MCF 10A (cell line): ENCODE measurements at regions of chr19 and their contacts with region 1.

Region 1: GRCh38 chr19:35066691-35067563 is 25.4 kb downstream of the HPN start:
- DNase-seq: peak; percentile 90
- H3K4me3 Mint-ChIP-seq: no peak overlapping the region
- H3K27ac Mint-ChIP-seq: no peak overlapping the region
- H3K4me1 Mint-ChIP-seq: no peaks in the 10 kb centered on the region
- H3K27me3 Mint-ChIP-seq: no peaks in the 10 kb centered on the region
- CTCF ChIP-seq: peak; percentile 97

Region 2: DNA sequence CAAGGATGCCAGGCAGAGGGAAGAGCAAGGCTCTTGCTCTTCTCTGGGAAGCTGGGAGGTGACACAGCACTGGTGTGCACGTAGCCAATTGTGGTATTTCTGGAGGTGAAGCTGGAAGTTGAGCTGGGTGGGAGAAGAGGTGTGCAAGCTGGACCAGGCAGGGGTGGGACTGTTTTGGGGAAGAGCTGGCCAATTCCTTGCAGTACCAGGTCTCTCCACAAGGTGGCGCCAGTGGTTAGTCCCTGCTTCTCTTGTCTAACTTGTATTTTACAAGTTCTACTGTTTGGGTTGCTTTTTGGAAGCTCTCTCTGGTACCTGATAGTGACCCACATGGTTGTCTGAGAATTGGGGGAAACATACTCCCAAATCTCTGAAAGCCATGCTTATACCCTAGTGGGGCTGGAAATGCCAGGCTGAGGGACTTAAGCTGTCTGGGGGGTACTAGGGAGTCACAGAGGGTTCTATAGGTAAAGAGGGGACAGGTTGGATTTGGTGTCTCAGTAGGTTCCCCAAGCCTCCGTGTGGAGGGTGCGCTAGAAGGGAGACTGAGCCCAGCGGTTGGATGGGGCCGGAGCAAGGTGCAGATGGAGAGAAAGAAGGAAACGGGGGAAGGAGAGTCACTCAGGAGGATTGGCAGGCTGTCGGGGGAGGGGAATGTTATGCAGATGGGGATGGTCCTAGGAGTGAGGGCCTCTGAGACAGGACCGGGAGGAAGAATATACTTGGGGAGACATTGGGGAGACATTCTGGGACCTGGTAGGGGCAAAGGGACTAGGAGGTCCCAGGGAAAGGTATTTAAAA is 22.4 kb before region 1 on chr19:
- CTCF ChIA-PET with region 1: interaction called, 42 read pairs
- POLR2A ChIA-PET with region 1: interaction called, 4 read pairs
- intact Hi-C with region 1: no loop called
- DNase-seq: peak; percentile 77
- H3K4me3 Mint-ChIP-seq: no peak overlapping the region
- H3K27ac Mint-ChIP-seq: no peak overlapping the region
- H3K4me1 Mint-ChIP-seq: peaks cover 6% of the 10 kb centered on the region
- H3K27me3 Mint-ChIP-seq: no peaks in the 10 kb centered on the region
- CTCF ChIP-seq: peak; percentile 94

Region 3: GRCh38 chr19:35080613-35081170 is 13.8 kb after region 1 on chr19:
- CTCF ChIA-PET with region 1: interaction called, 25 read pairs
- POLR2A ChIA-PET with region 1: no interaction called
- intact Hi-C with region 1: no loop called
- DNase-seq: no peak
- H3K4me3 Mint-ChIP-seq: no peak overlapping the region
- H3K27ac Mint-ChIP-seq: no peak overlapping the region
- H3K4me1 Mint-ChIP-seq: no peaks in the 10 kb centered on the region
- H3K27me3 Mint-ChIP-seq: peaks cover 17% of the 10 kb centered on the region
- CTCF ChIP-seq: no peak

Region 4: GRCh38 chr19:35098413-35099049 is 31.6 kb after region 1 on chr19:
- CTCF ChIA-PET with region 1: interaction called, 34 read pairs
- POLR2A ChIA-PET with region 1: interaction called, 3 read pairs
- intact Hi-C with region 1: no loop called
- DNase-seq: no peak
- H3K4me3 Mint-ChIP-seq: no peak overlapping the region
- H3K27ac Mint-ChIP-seq: no peak overlapping the region
- H3K4me1 Mint-ChIP-seq: peaks cover 13% of the 10 kb centered on the region
- H3K27me3 Mint-ChIP-seq: no peaks in the 10 kb centered on the region
- CTCF ChIP-seq: no peak

Region 5: DNA sequence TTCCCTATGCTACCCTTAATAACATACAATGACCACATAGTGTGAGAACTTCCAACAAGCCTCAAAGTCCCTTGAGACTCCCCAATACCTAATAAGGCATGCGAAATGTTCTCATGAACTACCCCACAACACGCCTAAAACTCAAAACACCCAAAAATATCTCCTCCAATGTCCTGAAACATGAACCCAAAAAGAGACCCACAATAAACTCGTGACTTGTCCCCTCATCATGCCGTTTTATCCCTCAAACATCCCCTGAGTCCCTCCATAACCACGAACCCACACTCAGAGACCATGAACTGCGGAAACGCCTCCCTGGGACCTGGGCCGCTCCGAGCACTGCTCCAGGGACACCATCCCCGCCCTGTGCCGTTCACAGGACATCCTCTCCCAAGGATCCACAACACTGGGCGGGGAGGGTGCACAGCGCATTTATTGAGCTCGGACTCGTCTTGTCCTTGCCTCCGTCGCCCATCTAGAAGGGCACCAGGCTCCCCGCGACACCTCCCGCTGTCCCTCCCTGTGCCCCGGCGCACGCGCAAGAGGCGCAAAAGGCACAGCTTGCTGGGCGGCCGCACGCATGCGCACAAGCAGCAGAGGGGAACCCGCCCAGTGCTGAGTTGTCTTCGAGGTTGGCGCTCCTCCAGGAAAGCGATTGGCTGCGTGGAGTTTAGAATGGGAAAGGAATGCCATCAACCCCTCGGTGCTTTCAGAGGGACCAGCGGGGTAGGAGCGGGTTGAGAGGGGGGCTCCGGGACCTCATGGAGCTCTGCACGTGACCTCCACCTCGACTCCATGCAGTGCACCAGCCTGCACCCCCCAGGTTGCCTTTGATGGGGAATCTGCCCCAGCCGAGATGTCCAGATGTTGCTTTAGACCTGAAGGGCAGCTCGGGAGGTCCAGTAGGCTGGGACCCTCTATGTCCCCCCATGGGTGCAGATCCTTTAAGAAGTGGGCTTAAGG is 57.5 kb after region 1 on chr19:
- CTCF ChIA-PET with region 1: interaction called, 23 read pairs
- POLR2A ChIA-PET with region 1: interaction called, 12 read pairs
- intact Hi-C with region 1: no loop called
- DNase-seq: peak; percentile 97
- H3K4me3 Mint-ChIP-seq: peak overlapping the region; percentile 89
- H3K27ac Mint-ChIP-seq: peak overlapping the region; percentile 73
- H3K4me1 Mint-ChIP-seq: peaks cover 50% of the 10 kb centered on the region
- H3K27me3 Mint-ChIP-seq: no peaks in the 10 kb centered on the region
- CTCF ChIP-seq: no peak

Region 6: DNA sequence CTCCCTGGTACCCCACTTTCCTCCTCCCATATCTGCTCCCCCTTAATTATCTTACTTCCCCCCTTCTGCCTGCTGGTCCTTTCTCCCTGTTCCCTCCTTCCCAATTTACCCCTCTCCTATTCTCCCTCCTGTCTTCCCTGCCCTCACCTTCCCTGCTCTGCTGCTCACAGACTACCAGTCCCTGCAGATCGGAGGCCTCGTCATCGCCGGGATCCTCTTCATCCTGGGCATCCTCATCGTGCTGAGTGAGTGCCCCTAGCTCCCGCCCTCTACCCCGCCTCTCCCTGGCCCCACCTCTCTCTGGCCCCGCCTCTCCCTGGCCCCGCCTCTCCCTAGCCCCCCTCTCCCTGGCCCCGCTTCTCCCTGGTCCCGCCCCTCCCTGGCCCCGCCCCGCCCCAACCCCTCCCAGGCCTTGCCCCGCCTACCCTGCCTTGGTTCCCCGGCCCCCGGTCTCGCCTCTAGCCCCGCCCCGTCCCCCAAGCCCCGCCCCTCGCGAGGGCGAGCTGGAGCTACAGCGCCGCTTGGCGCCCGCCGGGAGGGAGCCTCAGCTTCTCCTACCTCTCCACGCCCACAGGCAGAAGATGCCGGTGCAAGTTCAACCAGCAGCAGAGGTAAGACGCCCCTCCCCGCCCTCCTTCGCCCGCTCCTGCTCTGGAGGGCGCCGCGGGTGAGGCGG is 74.2 kb after region 1 on chr19:
- CTCF ChIA-PET with region 1: interaction called, 80 read pairs
- POLR2A ChIA-PET with region 1: interaction called, 7 read pairs
- intact Hi-C with region 1: loop called (anchors 1 kb)
- DNase-seq: peak; percentile 93
- H3K4me3 Mint-ChIP-seq: no peak overlapping the region
- H3K27ac Mint-ChIP-seq: no peak overlapping the region
- H3K4me1 Mint-ChIP-seq: peaks cover 15% of the 10 kb centered on the region
- H3K27me3 Mint-ChIP-seq: peaks cover 19% of the 10 kb centered on the region
- CTCF ChIP-seq: peak; percentile 57

Region 7: DNA sequence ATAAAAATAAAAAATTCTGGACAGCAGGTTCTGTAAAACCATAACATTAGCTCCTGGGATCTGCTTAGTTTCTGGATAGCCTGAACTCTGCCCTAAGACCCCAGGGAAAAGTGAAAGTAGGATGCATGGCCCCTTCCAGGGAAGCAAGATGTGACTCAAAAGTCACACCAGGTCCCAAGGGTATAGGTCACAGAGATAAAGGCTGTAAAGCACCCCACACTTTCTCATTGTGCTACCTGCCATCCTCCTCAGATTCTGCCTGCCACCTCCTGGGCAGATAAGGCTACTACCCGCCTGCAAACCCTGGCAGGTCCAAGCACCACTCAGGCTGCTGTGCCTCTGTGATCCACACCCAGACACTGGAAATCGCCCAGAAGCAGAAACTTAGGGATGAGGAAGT is 401.7 kb after region 1 on chr19:
- CTCF ChIA-PET with region 1: no interaction called
- POLR2A ChIA-PET with region 1: no interaction called
- intact Hi-C with region 1: loop called (anchors 5 kb)
- DNase-seq: peak; percentile 52
- H3K4me3 Mint-ChIP-seq: no peak overlapping the region
- H3K27ac Mint-ChIP-seq: no peak overlapping the region
- H3K4me1 Mint-ChIP-seq: no peaks in the 10 kb centered on the region
- H3K27me3 Mint-ChIP-seq: peaks cover 22% of the 10 kb centered on the region
- CTCF ChIP-seq: peak; percentile 57